Panc1 (cell line): ENCODE measurements at regions of chr4 and their contacts with region 1.

Region 1: GRCh38 chr4:83738895-83739294 is 203.0 kb downstream of the GPAT3 start:
- DNase-seq: no peak
- ATAC-seq: no peak
- H3K4me3 ChIP-seq: no peak overlapping the region
- H3K27ac ChIP-seq: no peak overlapping the region
- H3K4me1 ChIP-seq: no peaks in the 10 kb centered on the region
- H3K27me3 ChIP-seq: peaks cover 5% of the 10 kb centered on the region
- CTCF ChIP-seq: no peak

Region 2: DNA sequence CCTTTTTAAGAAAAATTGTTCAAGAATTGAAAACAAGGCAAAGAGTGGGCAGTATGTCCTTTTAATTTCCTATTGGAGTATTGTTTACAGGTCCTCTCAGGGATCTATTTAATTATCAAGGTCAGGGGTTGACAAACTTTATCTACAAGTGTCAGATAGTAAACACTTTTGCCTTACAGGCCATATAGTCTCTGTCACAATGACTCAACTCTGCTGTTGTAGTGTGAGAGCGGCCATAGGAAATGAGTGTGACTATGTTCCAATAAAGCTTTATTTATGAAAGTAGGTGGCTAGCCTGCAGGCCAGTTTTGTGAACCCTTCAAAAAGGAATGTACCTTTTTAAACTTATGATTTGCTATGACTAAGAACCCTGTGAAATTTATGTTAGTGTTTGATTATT is 46.9 kb before region 1 on chr4:
- CTCF ChIA-PET with region 1: no interaction called
- POLR2A ChIA-PET with region 1: no interaction called
- in situ Hi-C with region 1: no loop called
- intact Hi-C with region 1: no loop called
- DNase-seq: no peak
- ATAC-seq: peak; percentile 87
- H3K4me3 ChIP-seq: no peak overlapping the region
- H3K27ac ChIP-seq: no peak overlapping the region
- H3K4me1 ChIP-seq: no peaks in the 10 kb centered on the region
- H3K27me3 ChIP-seq: no peaks in the 10 kb centered on the region
- CTCF ChIP-seq: no peak

Region 3: GRCh38 chr4:83757121-83757621 is 18.3 kb after region 1 on chr4:
- CTCF ChIA-PET with region 1: no interaction called
- POLR2A ChIA-PET with region 1: no interaction called
- in situ Hi-C with region 1: no loop called
- intact Hi-C with region 1: loop called (anchors 2 kb)
- DNase-seq: no peak
- ATAC-seq: no peak
- H3K4me3 ChIP-seq: no peak overlapping the region
- H3K27ac ChIP-seq: no peak overlapping the region
- H3K4me1 ChIP-seq: no peaks in the 10 kb centered on the region
- H3K27me3 ChIP-seq: no peaks in the 10 kb centered on the region
- CTCF ChIP-seq: no peak